ENCODE measurements at regions of chr2 and their contacts with region 1.

Region 1: DNA sequence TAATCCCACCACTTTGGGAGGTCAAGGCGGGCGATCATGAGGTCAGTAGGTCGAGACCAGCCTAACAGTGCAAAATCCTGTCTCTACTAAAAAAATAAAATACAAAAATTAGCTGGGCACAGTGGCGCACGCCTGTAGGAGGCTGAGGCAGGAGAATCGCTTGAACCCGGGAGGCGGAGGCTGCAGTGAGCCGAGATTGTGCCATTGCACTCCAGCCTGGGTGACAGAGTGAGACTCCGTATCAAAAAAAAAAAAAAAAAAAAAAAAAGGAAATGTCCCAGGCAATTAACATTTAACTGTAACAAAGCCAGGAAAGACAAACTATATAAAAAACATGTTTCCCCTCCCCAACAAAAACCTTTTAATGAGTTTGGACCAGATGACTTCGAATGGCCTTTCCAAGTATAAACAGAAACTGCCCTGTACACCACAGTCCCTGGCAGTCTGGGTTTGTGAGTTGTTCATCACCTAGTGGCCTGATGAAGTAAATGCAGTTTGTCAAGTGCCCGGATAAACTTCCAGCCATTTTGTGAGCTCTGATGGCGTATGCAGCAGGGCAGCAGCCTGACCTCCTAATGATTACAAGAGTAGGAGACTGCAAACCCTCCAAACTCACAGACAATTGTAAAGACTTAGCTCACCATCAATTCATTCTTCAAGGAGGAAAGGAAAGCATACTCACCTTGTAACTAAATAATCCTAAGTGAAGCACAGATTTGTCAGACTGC is 16.6 kb upstream of the PCBP1 start:
- DNase-seq: peak; percentile 87
- ATAC-seq: peak; percentile 90
- H3K4me3 ChIP-seq: no peak overlapping the region
- H3K27ac ChIP-seq: peak overlapping the region; percentile 41
- H3K4me1 ChIP-seq: peaks cover 36% of the 10 kb centered on the region
- H3K27me3 ChIP-seq: no peaks in the 10 kb centered on the region
- CTCF ChIP-seq: peak; percentile 91
- EP300 ChIP-seq: no peak
- POLR2A ChIP-seq: no peak
- RAD21 ChIP-seq: peak; percentile 85

Region 2: GRCh38 chr2:70086838-70087701 is 16.4 kb after region 1 on chr2 and contains the start of gene PCBP1:
- CTCF ChIA-PET with region 1: no interaction called
- POLR2A ChIA-PET with region 1: interaction called, 30 read pairs
- in situ Hi-C with region 1: no loop called
- intact Hi-C with region 1: no loop called
- DNase-seq: peak; percentile 94
- ATAC-seq: peak; percentile 49
- H3K4me3 ChIP-seq: peak within 1 kb of the TSS; percentile 93 to 95 (median 95)
- H3K27ac ChIP-seq: peak within 1 kb of the TSS; percentile 99
- H3K4me1 ChIP-seq: peaks cover 56% of the 10 kb centered on the region
- H3K27me3 ChIP-seq: no peaks in the 10 kb centered on the region; a peak in 1 of 5 replicates
- CTCF ChIP-seq: no peak
- EP300 ChIP-seq: no peak; a peak in 2 of 4 replicates
- POLR2A ChIP-seq: peak; percentile 71 to 81
- RAD21 ChIP-seq: peak; percentile 50; the same call in 1 of the 2 replicates
- total RNA-seq, gene PCBP1: 32.0 and 104 TPM in 2 replicates

Region 3: DNA sequence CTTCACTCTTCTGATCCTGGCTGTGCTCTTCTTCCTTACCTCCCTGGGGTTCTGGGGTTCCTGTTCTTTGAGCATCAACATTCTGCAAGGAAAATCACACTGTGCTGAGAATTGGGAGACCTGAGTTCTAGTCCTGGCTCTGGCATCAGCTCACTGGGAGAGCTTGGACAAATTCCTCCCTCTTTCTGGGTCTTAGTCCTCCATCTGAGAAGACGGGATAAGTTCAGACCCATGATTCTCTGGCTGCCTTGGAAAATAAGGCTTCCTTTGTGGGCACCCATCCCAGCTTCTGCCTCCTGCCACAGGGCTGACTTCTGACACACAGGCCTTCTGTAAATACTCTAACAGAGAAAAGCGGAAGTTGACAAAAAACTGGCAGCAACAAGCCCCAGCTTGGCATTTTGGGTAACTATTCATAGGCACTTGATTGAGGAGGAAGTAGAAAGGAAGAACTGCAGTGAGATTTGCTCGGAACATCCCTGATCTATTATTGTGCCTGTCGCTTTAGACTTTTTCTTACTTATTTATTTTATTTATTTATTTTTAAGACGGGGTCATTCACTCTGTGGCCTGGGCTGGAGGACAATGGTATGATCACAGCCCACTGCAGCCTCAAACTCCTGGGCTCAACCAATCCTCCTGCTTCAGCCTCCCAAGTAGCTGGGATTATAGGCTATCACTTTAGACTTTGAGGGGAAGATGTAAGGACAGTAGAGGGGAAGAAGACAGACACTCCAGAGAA is 24.4 kb after region 1 on chr2:
- CTCF ChIA-PET with region 1: no interaction called
- POLR2A ChIA-PET with region 1: interaction called, 10 read pairs
- in situ Hi-C with region 1: no loop called
- intact Hi-C with region 1: no loop called
- DNase-seq: peak; percentile 87
- ATAC-seq: peak; percentile 73
- H3K4me3 ChIP-seq: peak overlapping the region; percentile 36 to 67 (median 50)
- H3K27ac ChIP-seq: peak overlapping the region; percentile 73
- H3K4me1 ChIP-seq: peaks cover 46% of the 10 kb centered on the region
- H3K27me3 ChIP-seq: no peaks in the 10 kb centered on the region
- CTCF ChIP-seq: no peak
- EP300 ChIP-seq: peak in 1 of 2 experiments; percentile 51; a peak in 2 of 4 replicates
- POLR2A ChIP-seq: peak; percentile 24 to 48; a peak in 1 of 4 replicates
- RAD21 ChIP-seq: no peak; the same call in 1 of the 2 replicates

Region 4: GRCh38 chr2:70115646-70116442 is 45.1 kb after region 1 on chr2:
- CTCF ChIA-PET with region 1: no interaction called
- POLR2A ChIA-PET with region 1: no interaction called
- in situ Hi-C with region 1: no loop called
- intact Hi-C with region 1: no loop called
- DNase-seq: no peak
- ATAC-seq: no peak; the same call in 2 of the 3 replicates
- H3K4me3 ChIP-seq: no peak overlapping the region
- H3K27ac ChIP-seq: no peak overlapping the region
- H3K4me1 ChIP-seq: peaks cover 54% of the 10 kb centered on the region
- H3K27me3 ChIP-seq: no peaks in the 10 kb centered on the region
- CTCF ChIP-seq: no peak
- EP300 ChIP-seq: no peak
- POLR2A ChIP-seq: no peak
- RAD21 ChIP-seq: no peak

Measured in HepG2 (cell line).